Transverse colon (tissue), 4 donors: ENCODE measurements at regions of chr3 and their contacts with region 1.

Region 1: DNA sequence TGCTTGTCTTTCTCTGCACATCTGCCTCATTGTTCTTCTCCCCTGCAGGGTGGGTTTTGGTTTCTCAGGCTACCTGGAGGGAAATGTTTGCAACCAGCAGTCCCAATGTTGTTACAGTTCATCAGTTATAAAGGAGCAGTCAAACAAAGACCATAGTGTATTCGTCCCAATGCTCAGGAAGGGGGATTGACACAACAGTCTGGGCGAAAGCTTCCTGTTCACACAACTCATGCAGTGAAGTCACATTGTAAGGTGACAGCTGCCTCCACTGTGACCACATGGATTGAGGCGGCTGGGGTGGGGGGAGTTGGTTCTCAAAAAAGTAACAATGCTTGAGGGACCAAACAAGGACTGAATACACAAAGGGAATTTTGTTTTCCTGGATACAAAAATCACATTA is 28.8 kb upstream of the TF start:
- DNase-seq: no peak
- H3K4me3 ChIP-seq: no peak overlapping the region
- H3K27ac ChIP-seq: no peak overlapping the region
- H3K4me1 ChIP-seq: no peaks in the 10 kb centered on the region
- H3K27me3 ChIP-seq: no peaks in the 10 kb centered on the region
- CTCF ChIP-seq: no peak
- EP300 ChIP-seq: no peak
- POLR2A ChIP-seq: no peak

Region 2: DNA sequence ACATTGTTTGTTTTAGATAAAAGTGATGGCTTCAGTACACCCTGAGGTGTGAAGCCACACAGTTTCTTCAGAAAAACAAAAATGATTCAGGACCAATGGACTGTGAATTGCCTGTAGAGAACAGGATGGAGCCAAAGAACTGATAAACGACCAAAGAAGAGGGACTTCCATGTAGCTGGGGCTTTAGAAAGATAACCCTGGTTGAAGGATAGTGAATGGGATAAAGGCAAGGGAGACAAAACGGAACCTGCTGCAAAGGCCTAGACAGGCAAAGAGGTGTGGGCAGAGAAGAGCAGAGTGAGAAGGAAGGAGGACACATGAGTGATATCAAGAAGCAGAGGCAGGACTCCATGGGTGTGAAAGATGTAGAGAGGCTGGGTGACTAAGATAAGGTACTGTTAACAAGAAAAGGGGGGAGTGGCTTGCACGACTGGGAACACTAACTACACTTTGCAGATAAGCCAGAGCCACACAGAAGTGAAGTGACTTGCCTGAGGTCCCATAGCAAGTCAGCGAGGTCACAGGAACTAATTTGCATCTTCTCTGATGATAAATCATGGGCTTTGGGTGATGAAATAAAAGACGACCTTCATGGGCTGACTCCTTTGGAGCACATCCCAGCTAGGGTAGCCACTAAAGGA is 134.0 kb after region 1 on chr3:
- in situ Hi-C with region 1: no loop called
- intact Hi-C with region 1: loop called (anchors 5 kb)
- DNase-seq: no peak
- H3K4me3 ChIP-seq: no peak overlapping the region
- H3K27ac ChIP-seq: no peak overlapping the region
- H3K4me1 ChIP-seq: no peaks in the 10 kb centered on the region
- H3K27me3 ChIP-seq: no peaks in the 10 kb centered on the region
- CTCF ChIP-seq: no peak
- EP300 ChIP-seq: no peak
- POLR2A ChIP-seq: no peak

Region 3: GRCh38 chr3:133930341-133930933 is 213.0 kb after region 1 on chr3:
- in situ Hi-C with region 1: no loop called
- intact Hi-C with region 1: no loop called
- DNase-seq: no peak
- H3K4me3 ChIP-seq: no peak overlapping the region
- H3K27ac ChIP-seq: no peak overlapping the region
- H3K4me1 ChIP-seq: peaks cover 4 to 18% (median 10%) of the 10 kb centered on the region in 4 donors
- H3K27me3 ChIP-seq: no peaks in the 10 kb centered on the region
- CTCF ChIP-seq: peak; percentile 31 to 61 (median 49)
- EP300 ChIP-seq: no peak
- POLR2A ChIP-seq: no peak